ENCODE measurements at regions of chr17 and their contacts with region 1.

Region 1: GRCh38 chr17:15954222-15954621 is 9.3 kb downstream of the ADORA2B start:
- DNase-seq: no peak
- H3K4me3 Mint-ChIP-seq: no peak overlapping the region
- H3K27ac Mint-ChIP-seq: no peak overlapping the region
- H3K4me1 Mint-ChIP-seq: peaks cover 31% of the 10 kb centered on the region
- H3K27me3 Mint-ChIP-seq: peaks cover 29% of the 10 kb centered on the region

Region 2: DNA sequence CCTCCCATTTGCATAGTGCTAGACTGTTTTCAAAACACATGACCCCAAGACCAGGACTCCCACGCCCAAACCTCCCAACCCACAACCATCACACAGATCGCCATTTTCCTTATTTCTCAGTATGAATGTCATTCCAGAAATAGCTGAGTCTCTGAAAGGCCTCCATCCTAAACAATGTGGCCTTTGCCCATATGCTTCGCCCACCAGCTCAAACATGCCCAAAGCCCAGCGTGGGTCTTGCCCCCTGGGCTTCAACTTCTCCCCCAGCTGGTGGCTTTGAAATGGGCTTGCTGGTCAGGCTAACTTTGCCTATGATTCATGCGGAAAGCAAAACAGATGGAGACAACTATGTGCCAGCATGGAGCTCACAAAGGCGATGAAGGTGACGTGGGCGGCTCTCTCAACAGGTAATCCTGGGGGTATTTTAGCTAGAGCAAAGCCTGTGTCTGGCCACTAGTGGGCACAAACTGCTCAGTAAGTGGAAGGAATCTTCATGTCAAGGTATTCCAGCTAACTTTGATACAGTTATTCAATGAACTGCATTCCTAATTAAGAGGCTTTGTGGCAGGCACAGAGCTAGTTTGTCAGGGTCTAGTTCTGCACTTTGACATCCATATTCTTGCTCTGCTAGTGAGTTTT is 706.2 kb before region 1 on chr17:
- intact Hi-C with region 1: no loop called
- DNase-seq: no peak
- H3K4me3 Mint-ChIP-seq: no peak overlapping the region
- H3K27ac Mint-ChIP-seq: no peak overlapping the region
- H3K4me1 Mint-ChIP-seq: no peaks in the 10 kb centered on the region
- H3K27me3 Mint-ChIP-seq: peaks cover 2% of the 10 kb centered on the region

Region 3: DNA sequence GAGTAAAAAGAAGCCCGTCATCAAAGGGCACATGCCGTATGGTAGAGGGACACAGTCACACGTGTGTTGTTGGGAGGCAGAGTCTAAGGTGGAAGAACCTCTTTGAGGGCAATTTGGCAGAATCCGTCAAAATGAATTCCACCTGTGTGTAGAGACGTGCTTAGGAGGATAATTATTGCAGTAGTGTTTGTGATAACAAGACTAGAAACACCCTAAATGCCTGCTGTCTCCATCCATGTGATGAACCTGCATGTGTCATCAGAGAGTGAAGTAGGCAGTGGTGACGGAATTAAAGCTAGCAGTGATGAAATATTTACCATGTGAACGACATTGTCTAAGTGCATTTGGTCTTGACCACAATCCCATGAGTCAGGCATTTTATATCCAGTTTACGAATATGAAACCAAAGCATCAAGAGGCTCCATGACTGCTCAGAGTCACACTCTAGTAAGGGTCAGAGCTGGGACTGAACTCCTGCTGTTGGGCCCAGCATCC is 70.6 kb before region 1 on chr17:
- intact Hi-C with region 1: loop called (anchors 1 kb)
- DNase-seq: no peak
- H3K4me3 Mint-ChIP-seq: no peak overlapping the region
- H3K27ac Mint-ChIP-seq: no peak overlapping the region
- H3K4me1 Mint-ChIP-seq: peaks cover 29% of the 10 kb centered on the region
- H3K27me3 Mint-ChIP-seq: no peaks in the 10 kb centered on the region

Region 4: GRCh38 chr17:15999439-16000350 is 45.5 kb after region 1 on chr17 and contains the starts of genes TTC19 and ZSWIM7:
- intact Hi-C with region 1: loop called (anchors 1 kb)
- DNase-seq: peak; percentile 92
- H3K4me3 Mint-ChIP-seq: peak within 1 kb of the TSS; percentile 94
- H3K27ac Mint-ChIP-seq: peak within 1 kb of the TSS; percentile 96
- H3K4me1 Mint-ChIP-seq: peaks cover 27% of the 10 kb centered on the region
- H3K27me3 Mint-ChIP-seq: no peaks in the 10 kb centered on the region
- total RNA-seq, gene TTC19: 32.7 and 35.3 TPM in 2 replicates
- total RNA-seq, gene ZSWIM7: 12.8 and 14.2 TPM in 2 replicates

Region 5: DNA sequence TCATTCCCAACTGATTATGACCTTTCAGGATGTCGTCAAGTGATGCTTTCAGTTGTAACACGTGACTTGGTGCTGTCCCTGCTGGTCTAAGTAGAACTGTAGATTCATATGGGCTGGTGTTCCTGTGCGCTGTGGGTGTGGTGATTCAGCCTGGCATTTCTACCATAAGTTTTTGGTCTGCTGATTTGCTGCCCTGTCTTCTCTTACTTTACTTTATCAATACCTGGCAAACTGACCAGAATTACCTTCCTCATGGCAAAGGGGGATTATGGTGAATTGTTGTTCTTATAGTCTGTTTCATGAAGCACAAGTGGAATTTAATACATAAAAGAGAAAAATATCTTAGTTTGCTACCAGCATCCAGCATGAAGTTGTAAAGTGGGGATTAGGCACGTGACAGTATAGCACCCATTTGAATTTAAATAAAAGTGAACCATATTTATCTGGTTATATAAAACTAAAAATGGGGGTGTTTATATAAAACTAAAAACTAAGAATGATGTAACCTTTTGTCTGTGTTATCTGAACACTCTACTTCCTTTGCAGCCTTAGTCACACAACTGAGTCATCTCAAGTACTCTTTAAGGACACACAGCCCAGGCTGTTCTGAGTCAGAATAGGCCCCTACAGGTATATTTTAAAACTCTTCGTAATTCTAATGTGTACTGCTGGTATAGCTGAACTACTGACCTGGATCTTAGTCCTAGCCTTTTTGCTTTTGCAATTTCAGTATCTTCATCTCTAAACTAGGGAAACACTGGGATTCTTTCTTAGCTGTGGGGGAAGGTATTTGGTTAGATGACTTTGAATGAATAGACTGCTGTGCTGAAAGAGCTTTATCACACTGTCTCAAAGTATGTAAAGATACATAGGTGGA is 73.7 kb after region 1 on chr17:
- intact Hi-C with region 1: loop called (anchors 2 kb)
- DNase-seq: peak; percentile 15
- H3K4me3 Mint-ChIP-seq: peak overlapping the region; percentile 60
- H3K27ac Mint-ChIP-seq: peak overlapping the region; percentile 91
- H3K4me1 Mint-ChIP-seq: peaks cover 29% of the 10 kb centered on the region
- H3K27me3 Mint-ChIP-seq: no peaks in the 10 kb centered on the region